ENCODE measurements at regions of chr12 and their contacts with region 1.

Region 1: GRCh38 chr12:10212201-10213131 is at the start of gene GABARAPL1:
- DNase-seq: peak; percentile 77 to 90 (median 85)
- ATAC-seq: peak; percentile 85
- H3K4me3 ChIP-seq: peak within 1 kb of the TSS; percentile 91
- H3K4me3 Mint-ChIP-seq: peak within 1 kb of the TSS; percentile 94 to 98 (median 96)
- H3K27ac ChIP-seq: peak within 1 kb of the TSS; percentile 84
- H3K27ac Mint-ChIP-seq: peak within 1 kb of the TSS; percentile 91 to 99 (median 96)
- H3K4me1 ChIP-seq: peaks cover 12 to 22% of the 10 kb centered on the region in 2 donors
- H3K4me1 Mint-ChIP-seq: peaks cover 14 to 31% (median 25%) of the 10 kb centered on the region in 7 donors
- H3K27me3 ChIP-seq: no peaks in the 10 kb centered on the region
- H3K27me3 Mint-ChIP-seq: peaks cover 0 to 37% (median 0%) of the 10 kb centered on the region in 5 donors
- total RNA-seq, gene GABARAPL1: 3.7 to 165 (median 29.4) TPM

Region 2: DNA sequence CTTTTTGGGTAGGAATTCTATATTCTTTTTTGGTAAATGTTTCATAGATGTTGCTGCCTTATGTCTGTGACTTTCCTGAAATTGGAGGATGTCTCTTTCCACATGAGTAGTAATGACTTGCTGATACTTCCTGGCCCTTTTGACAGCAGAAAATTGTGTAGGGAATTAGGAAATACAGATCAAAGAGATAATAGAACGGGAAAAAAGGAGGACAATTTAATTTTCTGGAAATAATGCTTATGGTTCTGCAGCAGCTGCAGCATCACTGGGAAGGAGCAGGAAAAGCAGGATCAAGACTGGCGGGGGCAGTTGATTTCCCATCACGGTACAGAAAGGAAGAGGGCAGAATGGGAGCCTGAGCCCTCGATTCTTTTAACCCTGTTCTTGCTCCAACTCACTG is 935.5 kb before region 1 on chr12:
- CTCF ChIA-PET with region 1: no interaction called
- POLR2A ChIA-PET with region 1: no interaction called
- intact Hi-C with region 1: loop called in 1 of 2 experiments (anchors 5 kb)
- DNase-seq: no peak
- ATAC-seq: no peak
- H3K4me3 ChIP-seq: no peak overlapping the region
- H3K4me3 Mint-ChIP-seq: no peak overlapping the region
- H3K27ac ChIP-seq: no peak overlapping the region
- H3K27ac Mint-ChIP-seq: no peak overlapping the region
- H3K4me1 ChIP-seq: no peaks in the 10 kb centered on the region
- H3K4me1 Mint-ChIP-seq: no peaks in the 10 kb centered on the region
- H3K27me3 ChIP-seq: no peaks in the 10 kb centered on the region
- H3K27me3 Mint-ChIP-seq: peaks cover 0 to 31% (median 17%) of the 10 kb centered on the region in 5 donors

Region 3: GRCh38 chr12:9940375-9940774 is 272.1 kb before region 1 on chr12:
- CTCF ChIA-PET with region 1: no interaction called
- POLR2A ChIA-PET with region 1: interaction called, 3 read pairs
- intact Hi-C with region 1: loop called in 1 of 2 experiments (anchors 2 kb)
- DNase-seq: peak in 3 of 9 donors; percentile 20 to 36 (median 24)
- ATAC-seq: no peak
- H3K4me3 ChIP-seq: no peak overlapping the region
- H3K4me3 Mint-ChIP-seq: no peak overlapping the region
- H3K27ac ChIP-seq: no peak overlapping the region
- H3K27ac Mint-ChIP-seq: peak overlapping the region in 2 of 9 donors; percentile 8 to 32
- H3K4me1 ChIP-seq: no peaks in the 10 kb centered on the region
- H3K4me1 Mint-ChIP-seq: peaks cover 7 to 27% (median 14%) of the 10 kb centered on the region in 7 donors
- H3K27me3 ChIP-seq: no peaks in the 10 kb centered on the region
- H3K27me3 Mint-ChIP-seq: peaks cover 0 to 34% (median 0%) of the 10 kb centered on the region in 5 donors

Region 4: GRCh38 chr12:10613349-10614055 is 401.0 kb after region 1 on chr12 and contains the start of gene MAGOHB:
- CTCF ChIA-PET with region 1: no interaction called
- POLR2A ChIA-PET with region 1: interaction called, 13 read pairs
- intact Hi-C with region 1: loop called (anchors 1 kb)
- DNase-seq: peak; percentile 94 to 100 (median 97)
- ATAC-seq: peak; percentile 96
- H3K4me3 ChIP-seq: peak within 1 kb of the TSS; percentile 74
- H3K4me3 Mint-ChIP-seq: peak within 1 kb of the TSS; percentile 93 to 100 (median 98)
- H3K27ac ChIP-seq: peak within 1 kb of the TSS; percentile 93
- H3K27ac Mint-ChIP-seq: peak within 1 kb of the TSS; percentile 97 to 100 (median 100)
- H3K4me1 ChIP-seq: peaks cover 4 to 11% of the 10 kb centered on the region in 2 donors
- H3K4me1 Mint-ChIP-seq: peaks cover 12 to 38% (median 33%) of the 10 kb centered on the region in 7 donors
- H3K27me3 ChIP-seq: no peaks in the 10 kb centered on the region
- H3K27me3 Mint-ChIP-seq: peaks cover 0 to 26% (median 7%) of the 10 kb centered on the region in 5 donors
- total RNA-seq, gene MAGOHB: 12.1 to 43.1 (median 24.8) TPM

Region 5: GRCh38 chr12:11545484-11546330 is 1333.2 kb after region 1 on chr12:
- CTCF ChIA-PET with region 1: no interaction called
- POLR2A ChIA-PET with region 1: no interaction called
- intact Hi-C with region 1: loop called in 1 of 2 experiments (anchors 1 kb)
- DNase-seq: peak in 8 of 9 donors; percentile 50 to 87 (median 81)
- ATAC-seq: peak; percentile 87
- H3K4me3 ChIP-seq: peak overlapping the region; percentile 50
- H3K4me3 Mint-ChIP-seq: peak overlapping the region; percentile 74 to 84 (median 80)
- H3K27ac ChIP-seq: peak overlapping the region; percentile 81
- H3K27ac Mint-ChIP-seq: peak overlapping the region; percentile 92 to 99 (median 96)
- H3K4me1 ChIP-seq: peaks cover 28 to 69% of the 10 kb centered on the region in 2 donors
- H3K4me1 Mint-ChIP-seq: peaks cover 31 to 88% (median 68%) of the 10 kb centered on the region in 7 donors
- H3K27me3 ChIP-seq: no peaks in the 10 kb centered on the region
- H3K27me3 Mint-ChIP-seq: peaks cover 0 to 5% (median 0%) of the 10 kb centered on the region in 5 donors

Measured in naive thymus-derived CD4-positive, alpha-beta T cell (primary cell).